ENCODE measurements at regions of chr2 and their contacts with region 1.

Region 1: GRCh38 chr2:160429248-160430000 is 64.2 kb downstream of the RBMS1 start:
- H3K4me3 ChIP-seq: no peak overlapping the region
- H3K27ac ChIP-seq: no peak overlapping the region
- H3K4me1 ChIP-seq: peaks cover 17% of the 10 kb centered on the region
- CTCF ChIP-seq: no peak

Region 2: DNA sequence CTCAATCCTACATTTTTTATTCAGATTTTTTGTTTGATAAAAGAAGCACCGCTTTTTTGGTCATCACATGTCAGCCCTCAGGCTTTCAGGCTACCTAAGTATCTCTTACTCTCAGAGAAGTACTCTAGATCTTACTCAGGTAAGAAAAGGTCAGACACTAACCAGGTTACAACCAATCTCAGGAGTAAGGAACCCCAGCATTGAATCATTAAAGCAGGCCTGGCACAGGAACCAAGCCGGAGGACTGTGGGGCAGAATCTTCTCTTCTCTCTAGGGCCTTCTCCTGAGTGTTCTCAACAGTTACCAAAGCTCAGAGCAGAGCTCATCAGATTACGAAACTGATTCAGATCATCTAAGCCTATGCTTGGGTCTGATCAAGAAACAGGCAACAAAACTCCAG is 36.0 kb after region 1 on chr2:
- CTCF ChIA-PET with region 1: interaction called, 11 read pairs
- POLR2A ChIA-PET with region 1: no interaction called
- H3K4me3 ChIP-seq: no peak overlapping the region
- H3K27ac ChIP-seq: no peak overlapping the region
- H3K4me1 ChIP-seq: peaks cover 11% of the 10 kb centered on the region; the same call in 1 of the 2 replicates
- CTCF ChIP-seq: no peak

Measured in HEK293 (cell line).